ENCODE measurements at regions of chr1 and their contacts with region 1.

Region 1: GRCh38 chr1:78145105-78145580 is 99.4 kb downstream of the GIPC2 start:
- DNase-seq: peak; percentile 38
- H3K4me3 ChIP-seq: no peak overlapping the region
- H3K27ac ChIP-seq: no peak overlapping the region
- H3K27me3 ChIP-seq: no peaks in the 10 kb centered on the region
- CTCF ChIP-seq: peak; percentile 96

Region 2: DNA sequence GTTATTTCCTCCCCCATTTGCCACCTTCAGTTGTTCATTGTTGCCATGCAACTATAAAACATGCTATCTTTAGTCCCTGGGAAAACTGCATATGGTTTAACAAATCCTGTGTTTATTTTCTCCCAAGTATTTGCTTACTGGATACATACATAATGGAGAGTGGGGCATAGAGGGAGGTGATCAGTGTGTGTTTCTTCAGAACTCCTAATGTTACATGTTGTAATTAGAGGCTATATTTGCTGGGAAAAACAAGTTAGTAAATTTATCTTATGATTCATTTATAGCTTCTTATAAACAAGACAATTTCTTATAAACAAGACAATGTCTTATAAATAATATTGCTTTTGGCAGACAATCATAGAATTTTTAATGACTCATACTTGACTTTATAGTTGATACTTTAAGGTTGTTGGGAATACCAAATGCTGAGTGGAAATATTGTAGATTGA is 106.6 kb before region 1 on chr1:
- CTCF ChIA-PET with region 1: no interaction called
- POLR2A ChIA-PET with region 1: no interaction called
- DNase-seq: peak; percentile 34
- H3K4me3 ChIP-seq: no peak overlapping the region
- H3K27ac ChIP-seq: no peak overlapping the region
- H3K27me3 ChIP-seq: no peaks in the 10 kb centered on the region
- CTCF ChIP-seq: no peak

Region 3: DNA sequence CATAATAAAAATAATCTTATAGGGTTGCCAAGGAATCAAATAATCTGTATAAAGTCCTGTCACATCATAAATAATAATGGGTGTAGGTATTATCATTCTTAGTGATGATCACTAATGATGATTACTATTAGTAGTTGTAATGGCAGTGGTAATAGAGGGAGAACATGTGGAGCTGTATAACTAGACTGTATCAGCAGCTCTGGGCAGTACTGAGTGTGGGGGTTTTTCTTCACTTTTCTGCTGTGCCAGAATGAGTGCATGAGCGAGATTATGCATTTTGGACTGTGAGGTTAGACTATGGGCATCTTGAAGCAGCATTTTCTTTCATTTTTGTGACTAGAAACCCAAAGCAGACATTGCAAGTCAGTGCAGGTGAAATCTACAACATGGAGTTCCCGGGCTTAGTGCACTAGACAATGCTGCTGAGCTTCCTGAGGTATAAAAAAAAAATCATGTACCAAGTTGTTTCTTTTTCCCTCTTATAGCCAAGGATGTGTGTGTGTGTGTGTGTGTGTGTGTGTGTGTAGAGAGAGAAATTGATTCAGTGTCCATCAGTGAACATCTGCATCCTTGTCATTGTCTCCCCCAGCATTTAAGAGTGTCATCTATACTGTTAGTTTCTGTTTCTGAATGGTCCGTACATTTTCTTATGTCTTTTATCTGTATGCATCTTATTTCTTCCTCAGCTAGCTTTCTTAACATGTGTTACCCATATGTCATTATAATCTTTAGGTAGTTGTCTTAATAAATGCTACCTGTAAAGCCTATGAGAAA is 12.8 kb before region 1 on chr1:
- CTCF ChIA-PET with region 1: interaction called, 51 read pairs
- POLR2A ChIA-PET with region 1: no interaction called
- DNase-seq: no peak
- H3K4me3 ChIP-seq: no peak overlapping the region
- H3K27ac ChIP-seq: no peak overlapping the region
- H3K27me3 ChIP-seq: no peaks in the 10 kb centered on the region
- CTCF ChIP-seq: no peak

Region 4: DNA sequence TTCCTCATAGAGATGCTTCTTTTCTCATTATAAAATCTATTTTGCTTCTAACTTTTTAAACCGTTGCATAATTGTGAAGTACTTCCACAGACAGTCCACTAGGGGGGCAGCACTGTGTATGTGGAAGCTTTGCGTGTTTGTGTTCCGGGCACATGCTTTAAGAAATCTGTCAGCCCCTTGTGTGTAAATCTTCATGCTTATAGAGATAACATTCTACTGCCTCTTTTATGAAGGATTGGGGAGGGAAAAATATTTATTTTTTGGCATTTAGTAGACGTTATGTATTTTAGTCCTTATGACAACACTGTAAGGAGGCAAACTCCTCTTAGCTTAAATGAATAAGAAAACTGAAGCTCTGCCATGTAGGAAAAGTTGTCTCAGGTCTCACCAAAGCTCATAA is 188.4 kb after region 1 on chr1:
- CTCF ChIA-PET with region 1: interaction called, 15 read pairs
- POLR2A ChIA-PET with region 1: no interaction called
- DNase-seq: peak; percentile 18
- H3K4me3 ChIP-seq: no peak overlapping the region
- H3K27ac ChIP-seq: no peak overlapping the region
- H3K27me3 ChIP-seq: no peaks in the 10 kb centered on the region
- CTCF ChIP-seq: peak; percentile 81

Region 5: GRCh38 chr1:78591971-78592370 is 446.8 kb after region 1 on chr1:
- CTCF ChIA-PET with region 1: interaction called, 11 read pairs
- POLR2A ChIA-PET with region 1: no interaction called
- DNase-seq: no peak
- H3K4me3 ChIP-seq: no peak overlapping the region
- H3K27ac ChIP-seq: no peak overlapping the region
- H3K27me3 ChIP-seq: no peaks in the 10 kb centered on the region
- CTCF ChIP-seq: no peak

Region 6: DNA sequence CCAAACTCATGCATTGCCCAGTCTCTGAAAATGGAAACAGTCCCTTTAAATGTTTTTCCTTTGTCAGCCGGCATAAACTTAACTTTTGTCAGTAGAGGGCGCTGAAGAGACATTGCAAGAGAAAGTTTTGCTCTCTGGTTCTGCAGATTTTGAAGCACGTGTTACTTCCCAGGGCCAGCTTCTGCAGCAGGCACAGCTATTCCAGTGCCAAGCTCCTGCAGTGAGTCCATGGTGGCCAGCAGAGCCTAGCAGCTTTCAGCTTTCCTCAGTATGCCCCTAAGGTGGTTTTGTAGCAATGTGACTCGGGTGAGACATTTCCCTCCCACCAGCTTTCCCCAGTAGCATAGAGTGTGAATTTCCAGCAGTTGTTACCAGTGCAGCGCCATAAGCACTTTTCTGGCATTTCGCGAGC is 472.5 kb after region 1 on chr1:
- CTCF ChIA-PET with region 1: interaction called, 14 read pairs
- POLR2A ChIA-PET with region 1: no interaction called
- DNase-seq: peak; percentile 66
- H3K4me3 ChIP-seq: no peak overlapping the region
- H3K27ac ChIP-seq: no peak overlapping the region
- H3K27me3 ChIP-seq: no peaks in the 10 kb centered on the region
- CTCF ChIP-seq: peak; percentile 90